MCF 10A (cell line): ENCODE measurements at regions of chr20 and their contacts with region 1.

Region 1: GRCh38 chr20:21609221-21609620 is 95.4 kb upstream of the NKX2-2 start:
- DNase-seq: peak; percentile 27
- H3K4me3 Mint-ChIP-seq: no peak overlapping the region
- H3K27ac Mint-ChIP-seq: no peak overlapping the region
- H3K4me1 Mint-ChIP-seq: no peaks in the 10 kb centered on the region
- H3K27me3 Mint-ChIP-seq: peaks cover 26% of the 10 kb centered on the region
- CTCF ChIP-seq: no peak

Region 2: GRCh38 chr20:21303872-21304586 is 305.2 kb before region 1 on chr20:
- CTCF ChIA-PET with region 1: no interaction called
- POLR2A ChIA-PET with region 1: no interaction called
- intact Hi-C with region 1: no loop called
- DNase-seq: peak; percentile 8
- H3K4me3 Mint-ChIP-seq: peak overlapping the region; percentile 87
- H3K27ac Mint-ChIP-seq: peak overlapping the region; percentile 99
- H3K4me1 Mint-ChIP-seq: peaks cover 18% of the 10 kb centered on the region
- H3K27me3 Mint-ChIP-seq: no peaks in the 10 kb centered on the region
- CTCF ChIP-seq: no peak

Region 3: DNA sequence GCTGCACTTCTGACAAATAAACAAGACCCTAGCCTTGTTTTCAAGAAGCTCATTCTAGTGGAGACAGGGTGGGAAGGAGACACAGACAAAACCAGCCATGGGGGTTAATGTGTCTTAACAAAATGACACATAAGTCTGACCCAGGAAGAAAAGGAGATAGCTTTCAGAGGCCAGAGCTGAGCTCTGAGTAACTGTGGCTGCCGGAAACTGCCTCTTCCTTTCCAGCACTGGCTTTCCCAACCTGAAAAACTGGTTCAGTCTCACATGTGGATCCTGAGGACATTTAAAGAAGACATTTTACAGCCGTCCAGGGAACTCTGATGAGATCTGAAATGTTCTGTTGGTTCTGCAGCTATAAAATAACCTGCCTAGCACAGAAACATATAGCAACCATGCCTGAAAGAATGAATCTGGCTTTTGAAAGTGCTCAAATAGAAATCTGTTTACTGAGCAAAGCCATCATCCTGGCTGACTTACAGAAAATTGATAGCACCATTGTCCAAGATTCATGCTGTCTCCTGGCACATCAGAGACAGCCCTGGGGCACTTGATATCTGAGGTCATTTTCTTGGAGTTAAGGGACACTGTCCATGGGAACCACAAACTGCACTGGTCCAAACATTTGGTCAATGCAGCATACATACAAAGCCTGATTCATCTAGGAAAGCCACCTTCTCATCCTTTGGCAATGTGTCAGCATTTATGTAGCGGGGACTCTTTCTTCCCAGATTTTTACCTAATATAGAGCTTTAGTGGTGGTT is 13.1 kb after region 1 on chr20:
- CTCF ChIA-PET with region 1: interaction called, 45 read pairs
- POLR2A ChIA-PET with region 1: no interaction called
- intact Hi-C with region 1: no loop called
- DNase-seq: no peak
- H3K4me3 Mint-ChIP-seq: no peak overlapping the region
- H3K27ac Mint-ChIP-seq: no peak overlapping the region
- H3K4me1 Mint-ChIP-seq: no peaks in the 10 kb centered on the region
- H3K27me3 Mint-ChIP-seq: peaks cover 80% of the 10 kb centered on the region
- CTCF ChIP-seq: no peak